AG04449 (cell line): ENCODE measurements at regions of chr6 and their contacts with region 1.

Region 1: DNA sequence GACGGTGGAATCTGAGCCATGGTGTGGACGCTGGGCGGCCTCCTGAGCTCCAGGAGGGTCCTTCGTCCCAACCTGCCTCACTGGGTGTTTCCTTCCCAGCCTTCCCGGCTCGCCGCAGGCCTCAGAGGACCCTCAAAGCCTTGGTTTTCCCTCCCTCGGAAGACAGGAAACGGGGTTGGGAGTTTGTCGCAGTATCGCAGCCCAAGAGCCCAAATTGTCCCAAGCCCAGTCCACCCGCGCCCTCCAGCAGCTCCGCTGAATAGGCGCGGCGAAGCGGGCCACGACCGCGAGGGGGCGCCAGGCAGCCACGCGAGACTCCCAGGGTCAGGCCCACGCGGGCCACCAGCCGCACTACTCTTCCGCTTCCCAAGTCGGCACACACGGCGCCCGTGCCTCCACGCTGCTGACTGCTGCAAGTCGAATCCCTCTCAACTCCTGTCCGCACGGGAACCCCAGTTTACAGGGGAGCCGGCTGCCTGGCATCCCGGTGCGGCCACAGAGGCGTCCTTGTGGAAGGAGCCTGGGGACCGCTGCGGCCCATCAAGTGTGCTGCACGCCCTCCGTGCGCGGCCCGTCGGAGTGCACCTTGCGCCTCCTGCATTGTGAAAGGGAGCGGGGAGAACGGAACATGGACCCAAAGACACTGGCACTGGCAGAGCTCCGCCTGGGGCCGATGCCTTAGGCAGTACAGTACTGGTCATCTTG is 40.4 kb upstream of the HMGA1 start:
- DNase-seq: peak; percentile 4
- H3K4me3 ChIP-seq: peak overlapping the region; percentile 59
- CTCF ChIP-seq: peak; percentile 97

Region 2: DNA sequence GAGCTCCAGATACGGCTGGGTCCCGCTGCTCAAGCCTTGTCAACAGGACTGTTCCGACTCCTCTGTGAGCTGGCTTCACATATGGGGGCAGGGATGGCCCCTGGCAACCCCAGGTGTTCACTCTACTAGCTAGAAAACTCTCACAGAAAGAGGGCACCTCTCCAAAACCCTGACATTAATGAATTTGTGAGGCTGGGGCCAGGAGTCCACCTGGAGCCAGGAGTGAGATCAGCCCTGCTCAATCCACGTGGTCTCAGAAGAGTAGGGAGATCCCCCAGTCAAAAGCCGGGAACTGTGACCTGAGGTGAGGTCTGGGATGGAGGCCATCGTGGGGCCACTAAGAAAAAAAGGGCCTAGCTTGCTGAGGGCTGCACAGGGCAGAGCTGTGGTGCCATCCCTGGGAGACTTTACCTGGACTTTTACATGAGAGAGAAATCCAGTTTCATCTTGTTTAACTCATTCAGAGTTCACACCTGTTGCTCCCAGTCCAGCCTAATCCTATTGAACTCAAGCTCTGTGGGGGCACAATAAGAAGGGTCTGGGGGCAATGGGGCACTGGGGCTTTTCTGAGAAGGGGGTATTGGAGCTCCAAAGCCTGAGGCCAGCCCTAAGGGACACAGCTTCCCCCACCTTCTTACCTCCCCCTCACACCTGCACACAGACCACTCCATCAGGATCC is 248.2 kb before region 1 on chr6:
- CTCF ChIA-PET with region 1: no interaction called
- POLR2A ChIA-PET with region 1: no interaction called
- DNase-seq: no peak
- H3K4me3 ChIP-seq: no peak overlapping the region
- CTCF ChIP-seq: no peak

Region 3: GRCh38 chr6:34182751-34183531 is 13.3 kb before region 1 on chr6:
- CTCF ChIA-PET with region 1: interaction called, 16 read pairs
- POLR2A ChIA-PET with region 1: no interaction called
- DNase-seq: no peak
- H3K4me3 ChIP-seq: no peak overlapping the region
- CTCF ChIP-seq: no peak

Region 4: GRCh38 chr6:34236131-34236996 is 40.1 kb after region 1 on chr6 and contains the start of gene HMGA1:
- CTCF ChIA-PET with region 1: interaction called, 20 read pairs
- POLR2A ChIA-PET with region 1: interaction called, 4 read pairs
- DNase-seq: no peak
- H3K4me3 ChIP-seq: peak within 1 kb of the TSS; percentile 69
- CTCF ChIP-seq: no peak

Region 5: GRCh38 chr6:34414999-34415858 is 219.0 kb after region 1 on chr6:
- CTCF ChIA-PET with region 1: interaction called, 18 read pairs
- POLR2A ChIA-PET with region 1: interaction called, 5 read pairs
- DNase-seq: no peak
- H3K4me3 ChIP-seq: no peak overlapping the region
- CTCF ChIP-seq: peak; percentile 33

Region 6: DNA sequence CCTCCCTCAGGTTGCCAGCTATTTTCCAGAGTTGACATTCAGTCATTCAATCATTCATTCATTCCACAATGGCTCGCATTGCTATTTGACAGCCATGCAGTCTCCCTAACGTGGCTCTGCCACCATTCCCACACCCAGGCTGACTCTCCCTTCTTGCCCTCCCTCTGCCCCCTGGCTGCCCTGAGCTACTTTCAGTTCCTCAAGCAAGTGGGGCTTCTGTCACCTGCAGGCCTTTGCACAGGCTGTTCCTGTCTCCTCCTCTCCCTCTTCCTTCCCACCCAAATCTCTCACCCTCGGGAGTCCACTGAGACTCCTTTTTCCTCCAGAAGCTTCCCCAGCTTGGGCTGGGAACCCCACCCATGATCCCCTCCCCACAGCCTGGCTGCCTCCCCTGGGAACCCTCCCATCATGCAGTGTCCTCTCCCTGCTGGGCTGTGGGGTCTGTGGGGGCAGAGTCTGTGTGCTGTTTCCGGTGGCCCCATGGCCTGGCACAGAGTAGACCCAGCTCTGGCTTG is 272.2 kb after region 1 on chr6:
- CTCF ChIA-PET with region 1: no interaction called
- POLR2A ChIA-PET with region 1: no interaction called
- DNase-seq: no peak
- H3K4me3 ChIP-seq: no peak overlapping the region
- CTCF ChIP-seq: no peak

Region 7: GRCh38 chr6:34602318-34603111 is 406.2 kb after region 1 on chr6:
- CTCF ChIA-PET with region 1: interaction called, 92 read pairs
- POLR2A ChIA-PET with region 1: no interaction called
- DNase-seq: no peak
- H3K4me3 ChIP-seq: no peak overlapping the region
- CTCF ChIP-seq: no peak